Activated naive CD4-positive, alpha-beta T cell treated with anti-CD3 and anti-CD28 coated beads, Interleukin-2, amount 10 ng/mL, durations not matched to agents 7 days and 5 days (primary cell): ENCODE measurements at regions of chr7 and their contacts with region 1.

Region 1: GRCh38 chr7:143305423-143306070 is 10.4 kb upstream of the CLCN1 start:
- DNase-seq: peak; percentile 76
- H3K4me3 Mint-ChIP-seq: no peak overlapping the region
- H3K27ac Mint-ChIP-seq: peak overlapping the region; percentile 15
- H3K4me1 Mint-ChIP-seq: peaks cover 76% of the 10 kb centered on the region
- H3K27me3 Mint-ChIP-seq: no peaks in the 10 kb centered on the region

Region 2: DNA sequence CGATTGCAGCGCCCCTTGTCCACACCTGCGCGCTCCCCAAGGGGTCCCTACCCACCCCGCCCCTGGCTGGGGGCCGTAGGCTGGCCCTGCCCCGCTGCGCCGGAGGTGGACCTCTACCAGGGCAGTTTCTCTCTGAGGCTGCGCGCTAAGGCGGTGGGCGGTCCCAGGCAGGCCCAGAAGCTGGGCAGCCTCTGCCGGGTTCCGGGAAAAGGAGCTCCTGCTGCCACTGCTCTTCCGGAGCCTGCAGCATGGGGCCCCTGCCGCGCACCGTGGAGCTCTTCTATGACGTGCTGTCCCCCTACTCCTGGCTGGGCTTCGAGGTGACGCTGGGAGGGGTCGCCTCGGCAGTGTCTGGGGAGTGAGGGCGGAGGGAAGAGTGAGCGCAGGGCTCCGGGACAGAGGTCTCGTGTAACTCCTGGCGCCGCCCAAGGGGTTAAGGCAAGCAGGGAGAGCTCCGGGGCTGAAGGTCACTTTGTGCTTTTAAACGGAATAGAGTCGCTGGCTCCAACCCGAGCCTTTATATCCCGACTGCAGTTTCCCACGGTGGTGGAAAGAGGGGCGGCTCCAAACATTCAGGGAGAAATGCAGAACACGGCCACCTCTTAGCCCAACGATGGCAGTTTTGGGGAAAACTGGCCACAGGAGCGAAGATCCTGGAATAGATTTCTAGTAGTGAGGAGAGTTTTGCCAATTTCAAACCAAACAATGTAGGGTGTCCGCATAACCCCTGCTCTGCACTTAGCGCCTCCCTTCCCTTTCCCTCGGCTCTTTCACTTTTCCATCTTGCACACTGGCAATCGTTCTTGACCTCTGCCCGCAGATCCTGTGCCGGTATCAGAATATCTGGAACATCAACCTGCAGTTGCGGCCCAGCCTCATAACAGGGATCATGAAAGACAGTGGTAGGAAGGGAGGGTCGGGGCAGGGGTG is 42.0 kb before region 1 on chr7 and contains the start of gene GSTK1:
- CTCF ChIA-PET with region 1: no interaction called
- DNase-seq: peak; percentile 89
- H3K4me3 Mint-ChIP-seq: peak within 1 kb of the TSS; percentile 87
- H3K27ac Mint-ChIP-seq: peak within 1 kb of the TSS; percentile 93
- H3K4me1 Mint-ChIP-seq: peaks cover 85% of the 10 kb centered on the region
- H3K27me3 Mint-ChIP-seq: no peaks in the 10 kb centered on the region

Region 3: GRCh38 chr7:143287935-143288826 is 17.4 kb before region 1 on chr7 and contains the start of gene CASP2:
- CTCF ChIA-PET with region 1: interaction called, 12 read pairs
- DNase-seq: peak; percentile 99
- H3K4me3 Mint-ChIP-seq: peak within 1 kb of the TSS; percentile 97
- H3K27ac Mint-ChIP-seq: peak within 1 kb of the TSS; percentile 93
- H3K4me1 Mint-ChIP-seq: peaks cover 71% of the 10 kb centered on the region
- H3K27me3 Mint-ChIP-seq: peaks cover 4% of the 10 kb centered on the region

Region 4: GRCh38 chr7:143345428-143345900 is 39.9 kb after region 1 on chr7:
- CTCF ChIA-PET with region 1: interaction called, 12 read pairs
- DNase-seq: peak; percentile 78
- H3K4me3 Mint-ChIP-seq: peak overlapping the region; percentile 56
- H3K27ac Mint-ChIP-seq: no peak overlapping the region
- H3K4me1 Mint-ChIP-seq: peaks cover 9% of the 10 kb centered on the region
- H3K27me3 Mint-ChIP-seq: peaks cover 53% of the 10 kb centered on the region